Endothelial cell of umbilical vein (primary cell): ENCODE measurements at regions of chr4 and their contacts with region 1.

Region 1: DNA sequence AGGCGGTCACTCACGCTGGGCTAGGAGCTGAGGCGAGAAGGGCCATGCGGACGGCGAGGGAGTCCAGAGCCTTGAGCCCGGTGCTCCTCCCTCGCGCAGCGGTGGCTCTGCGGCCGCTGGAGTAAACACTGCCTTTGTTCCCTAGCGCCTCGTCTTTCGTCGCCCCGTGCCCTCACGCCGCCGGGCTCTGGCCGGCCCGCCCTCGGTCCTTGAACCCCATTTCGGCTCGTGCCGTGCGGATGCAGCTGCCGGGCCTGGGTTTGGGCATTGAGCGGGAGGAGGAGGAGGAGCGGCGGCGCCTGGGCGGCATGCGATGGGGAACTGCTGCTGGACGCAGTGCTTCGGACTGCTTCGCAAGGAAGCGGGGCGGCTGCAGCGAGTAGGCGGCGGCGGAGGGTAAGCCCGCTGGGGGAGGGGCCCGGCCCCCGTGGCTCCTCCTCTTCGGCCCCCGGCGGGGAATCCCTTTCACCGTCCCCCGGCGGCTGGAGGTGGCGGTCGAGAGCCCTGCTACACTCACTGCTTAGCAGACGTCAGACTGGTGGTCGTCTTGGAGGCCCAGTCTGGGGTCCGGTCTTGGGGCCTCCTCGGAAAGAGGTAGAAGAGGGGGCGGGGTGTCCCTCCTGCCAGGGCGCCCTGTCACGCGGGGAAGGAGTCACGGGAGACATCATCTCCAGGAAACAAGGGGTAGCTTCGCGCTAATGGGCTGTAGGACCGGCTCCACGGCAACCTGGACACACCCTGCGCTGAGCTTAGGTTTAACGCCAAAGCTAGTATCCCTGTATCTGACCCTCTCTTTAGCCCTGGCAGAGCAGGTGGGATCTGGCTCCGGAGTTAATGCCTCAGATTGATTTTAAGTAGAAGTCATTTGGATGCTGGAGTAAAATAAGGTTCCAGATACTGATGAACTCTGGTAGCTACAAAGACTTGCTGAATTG is at the start of gene AP1AR:
- DNase-seq: peak; percentile 86
- H3K4me3 ChIP-seq: peak within 1 kb of the TSS; percentile 95 to 98 (median 97)
- H3K27ac ChIP-seq: peak within 1 kb of the TSS; percentile 77
- H3K4me1 ChIP-seq: peaks cover 33% of the 10 kb centered on the region
- H3K27me3 ChIP-seq: no peaks in the 10 kb centered on the region
- CTCF ChIP-seq: peak; percentile 24 to 62
- POLR2A ChIP-seq: peak; percentile 87
- total RNA-seq, gene AP1AR: 18.6 and 20.6 TPM in 2 replicates

Region 2: DNA sequence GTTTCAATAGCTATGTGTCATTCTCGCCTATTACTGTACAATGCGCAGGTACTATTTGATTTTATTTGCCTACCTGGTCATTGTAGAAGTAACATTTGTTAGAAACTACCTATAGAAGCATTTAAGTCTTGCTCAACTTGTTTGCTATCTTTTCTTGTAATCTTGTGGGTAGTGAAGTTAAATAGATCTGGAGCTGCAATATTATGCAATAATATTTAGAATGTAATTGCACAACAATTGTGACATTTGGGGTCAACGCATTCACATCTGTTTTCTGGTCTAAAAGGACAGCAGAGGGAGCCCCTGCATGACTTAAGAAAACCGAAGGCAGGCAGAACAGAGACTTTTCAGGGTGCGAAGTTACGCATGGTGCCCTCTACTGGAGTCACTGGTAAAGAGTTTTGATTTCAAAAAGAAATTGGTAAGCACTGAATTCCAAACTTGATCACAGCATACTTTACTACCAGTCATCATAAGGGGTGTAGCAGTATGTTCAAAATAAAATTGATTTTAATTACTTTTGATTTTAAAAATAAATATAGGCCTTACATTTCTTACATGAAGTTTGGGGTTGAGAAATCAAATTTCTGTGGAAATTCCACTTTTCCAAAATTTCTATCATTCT is 590.0 kb before region 1 on chr4:
- CTCF ChIA-PET with region 1: no interaction called
- POLR2A ChIA-PET with region 1: no interaction called
- dilution Hi-C with region 1: no loop called
- intact Hi-C with region 1: loop called (anchors 5 kb)
- DNase-seq: peak; percentile 86
- H3K4me3 ChIP-seq: no peak overlapping the region
- H3K27ac ChIP-seq: no peak overlapping the region
- H3K4me1 ChIP-seq: peaks cover 3% of the 10 kb centered on the region
- H3K27me3 ChIP-seq: no peaks in the 10 kb centered on the region
- CTCF ChIP-seq: peak; percentile 80 to 89
- POLR2A ChIP-seq: no peak

Region 3: GRCh38 chr4:112075129-112075753 is 156.8 kb before region 1 on chr4:
- CTCF ChIA-PET with region 1: interaction called, 4 read pairs
- POLR2A ChIA-PET with region 1: no interaction called
- dilution Hi-C with region 1: no loop called
- intact Hi-C with region 1: loop called (anchors 1 kb)
- DNase-seq: peak; percentile 78
- H3K4me3 ChIP-seq: no peak overlapping the region
- H3K27ac ChIP-seq: no peak overlapping the region
- H3K4me1 ChIP-seq: no peaks in the 10 kb centered on the region
- H3K27me3 ChIP-seq: no peaks in the 10 kb centered on the region
- CTCF ChIP-seq: peak; percentile 62 to 71
- POLR2A ChIP-seq: no peak

Region 4: GRCh38 chr4:112099701-112100297 is 132.2 kb before region 1 on chr4:
- CTCF ChIA-PET with region 1: interaction called, 191 read pairs
- POLR2A ChIA-PET with region 1: interaction called, 5 read pairs
- dilution Hi-C with region 1: no loop called
- intact Hi-C with region 1: loop called (anchors 1 kb)
- DNase-seq: peak; percentile 80
- H3K4me3 ChIP-seq: no peak overlapping the region
- H3K27ac ChIP-seq: no peak overlapping the region
- H3K4me1 ChIP-seq: peaks cover 10% of the 10 kb centered on the region
- H3K27me3 ChIP-seq: no peaks in the 10 kb centered on the region
- CTCF ChIP-seq: peak; percentile 28 to 45
- POLR2A ChIP-seq: no peak

Region 5: GRCh38 chr4:112145326-112145819 is 86.7 kb before region 1 on chr4 and contains the start of gene FAM241A:
- CTCF ChIA-PET with region 1: interaction called, 10 read pairs
- POLR2A ChIA-PET with region 1: no interaction called
- dilution Hi-C with region 1: no loop called
- intact Hi-C with region 1: loop called (anchors 1 kb)
- DNase-seq: peak; percentile 81
- H3K4me3 ChIP-seq: peak within 1 kb of the TSS; percentile 88 to 96 (median 91)
- H3K27ac ChIP-seq: peak within 1 kb of the TSS; percentile 77
- H3K4me1 ChIP-seq: peaks cover 24% of the 10 kb centered on the region
- H3K27me3 ChIP-seq: no peaks in the 10 kb centered on the region
- CTCF ChIP-seq: no peak
- POLR2A ChIP-seq: peak; percentile 92
- total RNA-seq, gene FAM241A: 8.3 and 9.1 TPM in 2 replicates

Region 6: DNA sequence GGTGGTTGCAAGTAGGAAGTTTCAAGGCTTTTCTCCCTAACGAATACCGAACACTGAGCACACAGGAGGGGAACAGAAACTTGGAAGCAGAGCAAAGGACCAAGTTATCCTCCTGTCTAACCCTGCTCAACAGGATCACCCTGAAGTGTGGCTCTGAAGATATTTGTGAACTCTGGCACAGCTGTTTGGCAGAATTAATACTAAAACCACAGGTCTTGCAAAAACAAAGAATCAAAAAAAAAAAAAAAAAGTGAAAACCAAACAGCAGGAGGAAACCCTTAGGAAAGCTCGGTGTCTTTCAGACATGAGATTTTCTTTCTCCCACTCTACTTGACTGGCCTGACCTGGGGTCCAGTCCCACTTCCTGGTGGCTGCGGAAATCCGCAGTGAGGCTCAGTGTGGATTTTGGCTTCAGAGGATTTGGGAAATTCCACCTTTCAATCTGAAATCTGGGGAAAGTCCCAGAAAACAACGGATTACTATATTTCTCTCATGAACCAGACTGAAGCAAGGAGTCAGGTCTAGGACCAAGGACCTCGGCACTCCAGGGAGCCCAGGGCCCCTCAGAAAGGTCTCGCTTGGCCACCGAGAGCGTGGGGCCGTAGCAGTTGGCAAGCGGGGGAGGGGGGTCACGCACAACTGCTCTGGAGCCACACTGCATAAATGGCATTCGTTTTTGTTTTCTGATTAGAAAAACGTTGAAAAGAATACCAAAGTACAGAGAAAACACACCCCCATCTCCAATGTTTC is 52.8 kb after region 1 on chr4:
- CTCF ChIA-PET with region 1: no interaction called
- POLR2A ChIA-PET with region 1: no interaction called
- dilution Hi-C with region 1: no loop called
- intact Hi-C with region 1: loop called (anchors 1 kb)
- DNase-seq: peak; percentile 69
- H3K4me3 ChIP-seq: peak overlapping the region; percentile 77 to 98 (median 92)
- H3K27ac ChIP-seq: peak overlapping the region; percentile 61
- H3K4me1 ChIP-seq: peaks cover 16% of the 10 kb centered on the region
- H3K27me3 ChIP-seq: no peaks in the 10 kb centered on the region
- CTCF ChIP-seq: no peak
- POLR2A ChIP-seq: no peak

Region 7: GRCh38 chr4:112636688-112637551 is 404.9 kb after region 1 on chr4 and contains the starts of genes LARP7 and ZGRF1:
- CTCF ChIA-PET with region 1: no interaction called
- POLR2A ChIA-PET with region 1: no interaction called
- dilution Hi-C with region 1: no loop called
- intact Hi-C with region 1: loop called (anchors 1 kb)
- DNase-seq: peak; percentile 99
- H3K4me3 ChIP-seq: peak within 1 kb of the TSS; percentile 85 to 97 (median 96)
- H3K27ac ChIP-seq: peak within 1 kb of the TSS; percentile 91
- H3K4me1 ChIP-seq: peaks cover 16% of the 10 kb centered on the region
- H3K27me3 ChIP-seq: no peaks in the 10 kb centered on the region
- CTCF ChIP-seq: peak; percentile 84 to 88
- POLR2A ChIP-seq: no peak
- total RNA-seq, gene LARP7: 30.8 and 35.1 TPM in 2 replicates
- total RNA-seq, gene ZGRF1: 14.0 and 14.4 TPM in 2 replicates